ENCODE measurements at regions of chr20 and their contacts with region 1.

Region 1: DNA sequence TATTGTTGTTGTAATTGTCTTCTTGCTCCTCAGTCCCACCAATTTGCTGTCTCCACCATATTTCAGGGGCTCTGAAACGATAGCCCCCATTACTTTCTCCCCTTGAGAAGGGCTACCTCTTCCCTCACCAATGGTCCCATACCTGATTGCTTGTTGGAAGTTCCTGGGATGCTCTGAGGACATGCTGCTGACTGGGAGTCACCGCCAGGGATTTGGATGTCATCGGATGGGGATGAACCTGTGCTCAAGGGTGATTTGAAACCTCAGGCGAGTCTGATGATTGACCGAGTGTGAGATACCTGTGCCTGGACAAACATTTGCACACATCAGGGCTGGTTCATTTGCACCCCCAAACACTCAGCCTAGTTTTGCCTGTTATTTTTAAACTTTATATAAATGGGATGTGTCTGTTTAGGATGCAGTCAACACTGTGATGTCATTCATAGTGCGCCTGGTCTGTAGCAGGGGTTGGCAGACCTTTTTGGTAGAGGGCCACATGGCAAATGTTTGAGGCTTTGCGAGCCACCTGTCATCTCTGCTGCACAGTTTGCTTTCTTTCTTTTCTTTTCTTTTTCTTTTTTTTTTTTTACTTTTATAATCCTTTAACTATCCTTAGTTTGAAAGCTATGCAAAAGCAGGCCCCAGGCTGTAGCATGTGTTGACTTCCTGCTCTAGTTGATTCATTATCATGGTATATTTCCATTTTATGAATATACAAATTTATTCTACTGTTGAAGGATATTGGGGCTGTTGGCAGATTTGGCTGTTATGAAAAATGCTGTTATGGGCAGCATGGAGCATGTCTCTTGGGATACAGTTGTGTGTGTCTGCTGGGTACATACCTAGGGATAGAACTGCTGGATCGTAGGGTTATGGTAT is 118.5 kb upstream of the PHACTR3 start:
- H3K4me3 ChIP-seq: no peak overlapping the region
- H3K27ac ChIP-seq: no peak overlapping the region
- H3K4me1 ChIP-seq: no peaks in the 10 kb centered on the region
- CTCF ChIP-seq: no peak

Region 2: DNA sequence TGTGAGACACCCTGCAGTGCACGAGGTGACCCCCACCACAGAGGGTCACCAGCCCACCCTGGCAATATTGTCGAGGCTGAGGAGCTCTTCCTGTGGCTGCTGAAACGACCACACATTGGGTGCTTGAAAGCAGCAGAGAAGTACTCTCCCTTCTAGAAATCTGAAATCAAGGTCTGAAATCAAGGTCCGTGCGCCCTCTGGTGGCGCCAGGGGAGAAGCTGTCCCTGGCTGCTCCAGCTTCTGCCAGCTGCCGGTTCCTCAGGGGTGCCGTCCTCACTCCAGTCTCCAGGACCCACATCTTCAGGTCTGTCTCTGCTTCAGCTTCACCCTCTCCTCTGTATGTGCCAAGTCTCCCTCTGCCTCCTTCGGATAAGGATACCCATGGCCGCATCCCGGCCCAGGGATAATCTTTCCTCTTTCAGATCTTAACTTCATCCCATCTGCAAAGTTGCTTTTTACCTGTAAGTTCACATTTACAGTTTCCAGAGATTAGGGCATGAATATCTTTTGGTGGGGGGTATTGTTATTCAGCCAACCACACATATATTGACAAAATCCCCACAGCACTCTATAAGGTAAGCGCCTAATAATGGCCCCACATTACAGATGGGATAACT is 10.2 kb after region 1 on chr20:
- CTCF ChIA-PET with region 1: interaction called, 10 read pairs
- POLR2A ChIA-PET with region 1: no interaction called
- H3K4me3 ChIP-seq: no peak overlapping the region
- H3K27ac ChIP-seq: no peak overlapping the region
- H3K4me1 ChIP-seq: no peaks in the 10 kb centered on the region
- CTCF ChIP-seq: peak; percentile 78